Head of caudate nucleus (tissue), 42 donors: ENCODE measurements at regions of chr11 and their contacts with region 1.

Region 1: DNA sequence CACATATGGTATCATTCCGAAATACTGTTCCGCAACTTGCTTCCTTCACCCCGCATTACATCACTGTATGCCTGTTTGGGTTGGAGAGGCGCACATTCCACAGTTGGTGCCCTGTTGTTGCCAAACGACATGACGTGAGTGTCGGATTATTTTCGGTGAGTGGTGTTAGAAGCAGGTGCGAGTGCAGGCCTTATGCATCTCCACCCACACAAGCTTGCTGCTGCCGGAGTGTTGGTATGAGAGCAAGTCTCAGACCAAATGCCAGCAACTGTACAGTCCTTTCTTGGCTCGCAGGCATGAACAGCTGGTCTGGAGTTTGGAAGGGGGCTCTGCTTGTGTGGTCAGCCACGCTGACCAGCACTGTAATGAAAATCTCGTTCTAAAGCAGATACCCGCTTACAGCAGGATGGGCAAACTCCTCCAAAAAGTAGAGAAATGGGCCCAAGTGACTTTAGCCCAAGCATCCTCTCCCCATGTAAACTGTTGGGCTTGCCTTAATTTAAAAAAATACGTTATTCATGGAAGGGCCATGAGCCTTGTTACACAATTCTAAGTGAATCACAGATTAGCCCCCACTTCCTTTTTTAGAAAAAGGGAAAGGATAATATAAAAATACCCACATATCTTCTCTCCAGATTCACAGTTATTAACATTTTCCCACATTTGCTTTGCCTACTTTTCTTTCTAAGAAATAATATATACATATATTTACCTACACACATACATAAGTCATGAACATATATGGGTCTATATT is 48.7 kb upstream of the OR9Q1 start:
- DNase-seq: peak in 3 of 42 donors; percentile 9 to 17 (median 14)

Region 2: DNA sequence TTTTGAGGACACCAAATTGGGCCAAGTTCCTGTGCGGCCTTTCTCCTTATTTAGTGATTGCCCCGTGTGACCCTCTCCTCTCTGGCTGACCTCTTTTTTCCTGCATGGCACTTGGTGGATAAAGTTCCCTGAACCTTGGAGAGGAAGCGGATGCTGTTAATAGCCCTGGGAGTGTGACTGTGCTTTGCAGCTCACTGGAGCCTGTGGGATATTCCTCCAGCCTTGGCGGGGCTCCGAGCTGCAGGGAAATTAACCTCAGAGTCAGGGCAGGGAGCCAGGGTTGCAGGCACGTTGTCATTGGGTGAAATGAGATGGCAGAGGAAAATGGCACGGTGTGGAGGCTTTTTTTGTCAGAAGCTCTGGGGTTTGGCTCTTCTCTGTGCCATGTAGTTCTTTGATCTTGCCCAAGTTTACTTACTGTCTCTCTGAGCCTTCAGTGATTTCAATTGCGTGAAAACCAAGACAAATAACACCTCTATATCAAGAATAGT is 49.6 kb after region 1 on chr11:
- intact Hi-C with region 1: loop called (anchors 5 kb)
- DNase-seq: peak in 7 of 42 donors; percentile 2 to 30 (median 5)